Activated naive CD4-positive, alpha-beta T cell treated with anti-CD3 and anti-CD28 coated beads for 36 hours (primary cell): ENCODE measurements at regions of chr12 and their contacts with region 1.

Region 1: GRCh38 chr12:108803428-108804105 is 53.8 kb downstream of the SSH1 start:
- DNase-seq: peak; percentile 83
- H3K4me3 Mint-ChIP-seq: no peak overlapping the region
- H3K27ac Mint-ChIP-seq: peak overlapping the region; percentile 76
- H3K4me1 Mint-ChIP-seq: peaks cover 7% of the 10 kb centered on the region
- H3K27me3 Mint-ChIP-seq: no peaks in the 10 kb centered on the region

Region 2: GRCh38 chr12:108568338-108569154 is 235.0 kb before region 1 on chr12:
- CTCF ChIA-PET with region 1: interaction called, 14 read pairs
- intact Hi-C with region 1: loop called (anchors 1 kb)
- DNase-seq: peak; percentile 89
- H3K4me3 Mint-ChIP-seq: peak overlapping the region; percentile 30
- H3K27ac Mint-ChIP-seq: peak overlapping the region; percentile 91
- H3K4me1 Mint-ChIP-seq: peaks cover 90% of the 10 kb centered on the region
- H3K27me3 Mint-ChIP-seq: no peaks in the 10 kb centered on the region

Region 3: DNA sequence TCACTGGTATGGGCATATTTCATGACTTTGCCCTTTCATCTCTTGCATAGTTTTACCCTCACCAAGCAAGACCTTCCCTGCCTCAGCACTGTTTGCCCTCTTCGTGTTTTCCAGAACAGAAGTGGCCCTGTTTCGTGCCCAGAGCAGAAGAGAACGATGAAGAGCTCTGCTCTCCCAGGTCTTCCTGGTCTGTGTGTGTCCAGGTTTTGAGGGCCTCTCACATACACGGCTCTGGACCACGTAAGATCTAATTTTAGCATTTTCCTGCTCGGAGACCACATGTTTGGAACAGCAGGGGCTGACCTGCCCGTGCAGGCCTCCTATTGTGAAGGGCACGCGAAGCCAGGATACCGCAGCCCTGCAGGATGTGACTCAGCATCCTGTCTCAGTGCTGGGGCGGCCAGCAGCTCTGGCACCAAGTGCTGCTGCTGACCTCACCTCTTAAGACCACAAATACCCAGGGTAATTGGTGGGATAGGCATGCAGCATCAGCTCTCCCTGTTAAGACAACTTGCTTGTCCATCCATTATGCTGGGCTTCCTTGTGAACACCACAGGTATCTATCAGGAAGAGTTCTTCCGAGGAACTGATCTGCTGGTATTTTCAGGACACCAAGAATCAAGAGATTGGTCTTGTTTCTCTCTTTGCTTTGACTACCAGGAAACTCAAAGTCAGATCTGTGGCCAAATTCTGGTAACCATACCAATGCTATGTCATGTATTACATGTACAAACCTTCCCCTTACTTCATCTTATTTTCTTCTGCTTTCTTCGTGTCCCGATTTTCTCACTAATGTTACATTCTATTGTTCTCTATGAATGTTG is 34.8 kb after region 1 on chr12:
- CTCF ChIA-PET with region 1: no interaction called
- intact Hi-C with region 1: no loop called
- DNase-seq: peak; percentile 81
- H3K4me3 Mint-ChIP-seq: peak overlapping the region; percentile 25
- H3K27ac Mint-ChIP-seq: peak overlapping the region; percentile 83
- H3K4me1 Mint-ChIP-seq: peaks cover 29% of the 10 kb centered on the region
- H3K27me3 Mint-ChIP-seq: no peaks in the 10 kb centered on the region

Region 4: DNA sequence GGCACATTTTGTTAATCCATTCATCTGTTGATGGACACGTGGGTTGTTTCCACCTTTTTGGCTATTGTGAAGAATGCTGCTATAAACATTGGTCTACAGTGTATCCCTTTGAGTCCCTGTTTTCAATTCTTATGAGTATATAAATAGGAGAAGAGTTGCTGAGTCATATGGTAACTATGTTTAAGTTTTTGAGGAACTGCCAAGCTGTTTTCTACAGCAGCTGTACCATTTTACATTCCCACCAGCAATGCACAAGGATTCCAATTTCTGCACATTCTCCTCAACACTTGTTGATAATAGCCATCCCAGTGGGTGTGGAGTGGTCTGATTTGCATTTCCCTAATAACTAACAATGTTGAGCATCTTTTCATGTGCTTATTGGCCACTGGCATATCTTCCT is 224.2 kb after region 1 on chr12:
- CTCF ChIA-PET with region 1: no interaction called
- intact Hi-C with region 1: no loop called
- DNase-seq: no peak
- H3K4me3 Mint-ChIP-seq: no peak overlapping the region
- H3K27ac Mint-ChIP-seq: no peak overlapping the region
- H3K4me1 Mint-ChIP-seq: no peaks in the 10 kb centered on the region
- H3K27me3 Mint-ChIP-seq: peaks cover 4% of the 10 kb centered on the region

Region 5: GRCh38 chr12:109264095-109264942 is 460.8 kb after region 1 on chr12:
- CTCF ChIA-PET with region 1: no interaction called
- intact Hi-C with region 1: no loop called
- DNase-seq: peak; percentile 69
- H3K4me3 Mint-ChIP-seq: no peak overlapping the region
- H3K27ac Mint-ChIP-seq: no peak overlapping the region
- H3K4me1 Mint-ChIP-seq: no peaks in the 10 kb centered on the region
- H3K27me3 Mint-ChIP-seq: no peaks in the 10 kb centered on the region

Region 6: DNA sequence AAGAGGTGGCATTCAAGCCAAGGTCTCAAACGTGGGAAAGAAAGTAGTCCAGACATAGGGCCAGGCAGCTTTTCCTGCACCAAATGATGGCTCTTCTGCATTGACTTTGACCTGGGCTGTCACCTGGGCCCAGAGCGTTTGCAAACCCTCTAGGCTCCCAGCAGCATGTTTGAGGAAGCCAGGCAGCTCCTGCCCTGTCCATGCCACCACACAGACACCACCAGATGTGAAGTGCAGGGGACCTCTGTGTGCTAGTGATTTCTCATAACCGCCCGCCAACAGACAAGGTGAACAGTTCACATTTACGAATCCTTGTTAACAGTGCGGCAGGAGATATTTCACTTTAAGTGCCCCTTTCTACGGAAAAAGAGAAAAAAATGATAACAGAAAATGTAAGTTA is 860.2 kb after region 1 on chr12:
- CTCF ChIA-PET with region 1: no interaction called
- intact Hi-C with region 1: no loop called
- DNase-seq: no peak
- H3K4me3 Mint-ChIP-seq: no peak overlapping the region
- H3K27ac Mint-ChIP-seq: no peak overlapping the region
- H3K4me1 Mint-ChIP-seq: no peaks in the 10 kb centered on the region
- H3K27me3 Mint-ChIP-seq: peaks cover 3% of the 10 kb centered on the region